GM12878 (cell line): ENCODE measurements at regions of chr20 and their contacts with region 1.

Region 1: GRCh38 chr20:52586660-52587059 is 385.5 kb upstream of the TSHZ2 start:
- DNase-seq: no peak
- ATAC-seq: no peak
- H3K4me3 ChIP-seq: no peak overlapping the region
- H3K27ac ChIP-seq: no peak overlapping the region
- H3K4me1 ChIP-seq: no peaks in the 10 kb centered on the region
- H3K27me3 ChIP-seq: no peaks in the 10 kb centered on the region
- CTCF ChIP-seq: no peak
- EP300 ChIP-seq: no peak
- POLR2A ChIP-seq: no peak
- RAD21 ChIP-seq: no peak

Region 2: DNA sequence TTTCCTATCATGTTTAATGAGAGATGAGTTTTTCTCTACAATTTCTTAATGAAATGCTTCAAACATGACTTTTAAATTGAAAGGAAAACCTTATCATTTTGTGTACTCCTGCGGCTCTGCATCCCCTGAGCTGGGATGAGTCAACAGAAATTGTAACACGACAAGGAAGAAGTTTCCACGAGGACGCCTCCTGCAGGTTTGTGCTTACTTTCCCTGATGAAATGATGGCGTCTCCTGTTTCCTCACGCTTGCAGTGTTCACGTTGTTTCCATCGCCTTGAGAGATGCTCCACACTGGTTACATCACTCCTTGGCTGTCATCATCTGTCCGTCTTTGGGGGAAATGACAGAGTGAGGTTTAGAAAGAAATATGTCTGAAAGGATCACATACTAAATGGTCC is 161.4 kb before region 1 on chr20:
- CTCF ChIA-PET with region 1: no interaction called
- POLR2A ChIA-PET with region 1: no interaction called
- RAD21 ChIA-PET with region 1: no interaction called
- SMC1A ChIA-PET with region 1: no interaction called
- in situ Hi-C with region 1: no loop called
- intact Hi-C with region 1: no loop called
- DNase-seq: no peak
- ATAC-seq: no peak
- H3K4me3 ChIP-seq: no peak overlapping the region
- H3K27ac ChIP-seq: no peak overlapping the region
- H3K4me1 ChIP-seq: no peaks in the 10 kb centered on the region
- H3K27me3 ChIP-seq: no peaks in the 10 kb centered on the region
- CTCF ChIP-seq: no peak
- EP300 ChIP-seq: no peak
- POLR2A ChIP-seq: no peak
- RAD21 ChIP-seq: no peak

Region 3: GRCh38 chr20:52722926-52723688 is 136.4 kb after region 1 on chr20:
- CTCF ChIA-PET with region 1: no interaction called
- POLR2A ChIA-PET with region 1: no interaction called
- RAD21 ChIA-PET with region 1: no interaction called
- SMC1A ChIA-PET with region 1: no interaction called
- in situ Hi-C with region 1: no loop called
- intact Hi-C with region 1: loop called (anchors 5 kb)
- DNase-seq: no peak
- ATAC-seq: no peak
- H3K4me3 ChIP-seq: no peak overlapping the region
- H3K27ac ChIP-seq: no peak overlapping the region
- H3K4me1 ChIP-seq: no peaks in the 10 kb centered on the region
- H3K27me3 ChIP-seq: no peaks in the 10 kb centered on the region
- CTCF ChIP-seq: no peak
- EP300 ChIP-seq: no peak
- POLR2A ChIP-seq: no peak
- RAD21 ChIP-seq: no peak

Region 4: DNA sequence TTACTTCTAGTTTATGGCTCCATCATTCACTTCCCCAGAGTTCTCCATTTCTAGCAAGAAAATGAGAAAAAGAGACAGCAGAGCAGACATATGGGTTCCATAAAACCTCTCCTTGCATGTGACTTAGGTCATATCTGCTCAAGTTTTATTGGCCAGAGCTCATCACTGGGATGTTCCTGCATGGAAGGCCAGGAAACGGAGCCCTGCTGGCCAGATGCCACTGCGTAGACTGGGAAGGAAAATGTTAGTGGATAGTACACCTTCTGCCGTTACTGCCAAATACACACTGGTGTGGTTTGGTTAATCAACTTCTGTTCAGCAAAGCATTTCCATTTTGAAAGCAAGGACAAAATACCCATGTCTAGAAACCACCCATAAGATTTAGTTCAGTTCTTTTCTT is 164.9 kb after region 1 on chr20:
- CTCF ChIA-PET with region 1: no interaction called
- POLR2A ChIA-PET with region 1: no interaction called
- RAD21 ChIA-PET with region 1: no interaction called
- SMC1A ChIA-PET with region 1: no interaction called
- in situ Hi-C with region 1: no loop called
- intact Hi-C with region 1: no loop called
- DNase-seq: no peak
- ATAC-seq: no peak
- H3K4me3 ChIP-seq: no peak overlapping the region
- H3K27ac ChIP-seq: no peak overlapping the region
- H3K4me1 ChIP-seq: no peaks in the 10 kb centered on the region
- H3K27me3 ChIP-seq: no peaks in the 10 kb centered on the region
- CTCF ChIP-seq: no peak
- EP300 ChIP-seq: no peak
- POLR2A ChIP-seq: no peak
- RAD21 ChIP-seq: no peak